Activated CD4-positive, alpha-beta T cell treated with anti-CD3 and anti-CD28 coated beads, Interleukin-2, amount 10 ng/mL, durations not matched to agents 24 days and 14 days (primary cell): ENCODE measurements at regions of chr17 and their contacts with region 1.

Region 1: GRCh38 chr17:79789534-79790353 is 7.1 kb downstream of the CBX8 start:
- DNase-seq: peak; percentile 79
- H3K4me3 Mint-ChIP-seq: no peak overlapping the region
- H3K27ac Mint-ChIP-seq: no peak overlapping the region
- H3K4me1 Mint-ChIP-seq: no peaks in the 10 kb centered on the region
- H3K27me3 Mint-ChIP-seq: peaks cover 54% of the 10 kb centered on the region

Region 2: DNA sequence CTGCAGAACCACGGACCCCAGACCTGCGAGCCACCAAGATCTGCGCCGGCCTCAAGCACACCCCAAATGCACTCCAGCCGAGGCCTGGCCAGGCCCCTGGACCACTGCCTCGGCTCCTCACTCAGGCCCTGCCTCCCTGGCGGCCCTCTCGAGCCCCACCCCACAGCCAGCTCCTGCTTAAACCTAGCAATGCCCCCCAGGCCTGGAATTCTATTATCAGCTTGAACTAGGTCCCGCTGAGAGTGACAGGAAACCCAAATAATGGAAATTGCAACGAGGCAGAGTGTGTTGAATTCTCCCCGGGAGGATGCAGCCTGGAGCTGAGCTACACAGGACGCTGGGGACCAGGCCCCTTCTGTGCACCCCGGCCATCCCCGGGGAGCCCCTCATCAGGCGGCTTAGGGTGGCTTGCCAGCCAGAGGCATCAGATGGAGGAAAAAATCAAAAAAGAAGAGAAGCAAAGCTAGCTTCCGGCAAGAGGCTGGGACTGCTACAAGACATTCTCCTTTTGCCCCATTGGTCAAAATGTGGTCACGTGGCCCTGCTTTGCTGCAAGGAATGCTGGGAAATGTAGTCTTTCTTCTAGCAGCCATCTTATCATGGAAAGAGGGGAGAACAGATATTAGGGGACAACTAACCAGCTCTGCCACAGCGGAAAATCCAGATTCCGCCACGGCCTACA is 61.4 kb before region 1 on chr17:
- intact Hi-C with region 1: no loop called
- DNase-seq: peak; percentile 95
- H3K4me3 Mint-ChIP-seq: peak overlapping the region; percentile 68
- H3K27ac Mint-ChIP-seq: peak overlapping the region; percentile 88
- H3K4me1 Mint-ChIP-seq: peaks cover 8% of the 10 kb centered on the region
- H3K27me3 Mint-ChIP-seq: no peaks in the 10 kb centered on the region

Region 3: DNA sequence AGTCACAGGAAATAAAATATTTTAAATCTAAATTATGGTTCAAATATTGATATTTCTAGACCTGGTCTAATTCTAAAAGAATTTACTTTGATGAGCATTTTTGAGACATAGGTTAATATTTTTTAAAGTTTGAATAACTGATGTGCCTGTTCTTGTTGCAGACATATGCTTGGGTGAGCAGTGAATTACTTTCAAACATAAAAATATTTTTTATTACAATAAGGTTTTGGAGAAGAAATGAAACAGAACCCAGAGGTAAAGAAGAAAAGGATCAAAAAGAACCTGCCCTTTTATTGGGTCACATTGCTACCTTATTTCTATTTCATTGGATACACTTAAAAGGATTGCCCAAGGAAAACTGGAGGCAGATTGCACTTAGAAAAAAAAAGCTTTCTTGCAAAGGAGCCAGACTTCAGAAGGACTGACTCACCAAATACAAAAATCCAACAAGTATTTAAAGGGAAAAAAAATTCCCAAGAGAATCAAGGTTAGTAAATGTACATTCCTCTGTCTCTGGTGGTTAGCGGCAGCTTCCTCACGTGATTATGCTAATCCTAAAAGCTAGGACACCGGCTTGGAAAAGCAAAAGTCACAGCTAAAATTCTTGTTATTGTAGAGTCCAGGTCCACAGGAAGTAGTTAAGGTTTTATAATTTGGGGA is 40.5 kb before region 1 on chr17:
- intact Hi-C with region 1: loop called (anchors 5 kb)
- DNase-seq: no peak
- H3K4me3 Mint-ChIP-seq: no peak overlapping the region
- H3K27ac Mint-ChIP-seq: no peak overlapping the region
- H3K4me1 Mint-ChIP-seq: peaks cover 13% of the 10 kb centered on the region
- H3K27me3 Mint-ChIP-seq: peaks cover 41% of the 10 kb centered on the region

Region 4: GRCh38 chr17:79839363-79840268 is 49.9 kb after region 1 on chr17 and contains the start of gene CBX4:
- intact Hi-C with region 1: no loop called
- DNase-seq: peak; percentile 96
- H3K4me3 Mint-ChIP-seq: peak within 1 kb of the TSS; percentile 97
- H3K27ac Mint-ChIP-seq: peak within 1 kb of the TSS; percentile 90
- H3K4me1 Mint-ChIP-seq: peaks cover 26% of the 10 kb centered on the region
- H3K27me3 Mint-ChIP-seq: peaks cover 29% of the 10 kb centered on the region
- total RNA-seq, gene CBX4: 18.5 and 19.4 TPM in 2 replicates

Region 5: GRCh38 chr17:80109713-80110446 is 320.1 kb after region 1 on chr17:
- intact Hi-C with region 1: no loop called
- DNase-seq: no peak
- H3K4me3 Mint-ChIP-seq: no peak overlapping the region
- H3K27ac Mint-ChIP-seq: no peak overlapping the region
- H3K4me1 Mint-ChIP-seq: peaks cover 1% of the 10 kb centered on the region
- H3K27me3 Mint-ChIP-seq: peaks cover 2% of the 10 kb centered on the region